Activated CD4-positive, alpha-beta memory T cell treated with anti-CD3 and anti-CD28 coated beads for 36 hours (primary cell): ENCODE measurements at regions of chr6 and their contacts with region 1.

Region 1: DNA sequence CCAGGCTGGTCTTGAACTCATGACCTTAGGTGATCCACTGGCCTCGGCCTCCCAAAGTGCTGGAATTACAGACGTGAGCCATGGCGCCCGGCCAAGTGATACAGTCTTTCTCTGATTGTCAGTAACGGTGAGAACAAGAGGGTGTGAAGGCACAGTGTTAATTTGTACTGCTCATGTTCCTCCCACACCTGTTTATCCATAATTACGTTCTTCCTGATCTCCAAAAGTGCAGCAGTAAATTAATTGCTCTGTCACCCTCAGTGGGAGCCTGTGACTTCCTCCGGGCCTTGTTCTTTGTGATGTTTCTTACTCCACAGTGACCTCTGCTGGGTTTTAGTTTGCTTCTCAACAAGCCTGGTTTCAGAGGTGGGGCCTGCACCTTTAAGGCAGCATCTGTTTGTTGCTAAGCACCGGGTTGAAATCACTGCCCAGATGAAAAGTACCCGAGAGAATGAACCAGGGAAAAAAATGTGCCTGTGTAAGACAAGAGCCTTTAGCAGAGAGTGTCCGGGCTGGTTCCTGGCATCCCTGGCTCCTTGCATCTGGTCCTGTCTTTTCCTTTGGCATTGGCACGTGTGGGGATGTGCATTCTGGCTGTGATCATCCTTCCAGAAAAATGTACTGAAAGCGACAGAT is 89.1 kb upstream of the CLDN20 start:
- DNase-seq: peak; percentile 73
- H3K4me3 Mint-ChIP-seq: no peak overlapping the region
- H3K27ac Mint-ChIP-seq: peak overlapping the region; percentile 7
- H3K4me1 Mint-ChIP-seq: peaks cover 50% of the 10 kb centered on the region
- H3K27me3 Mint-ChIP-seq: no peaks in the 10 kb centered on the region

Region 2: GRCh38 chr6:154410619-154411072 is 764.0 kb before region 1 on chr6:
- CTCF ChIA-PET with region 1: no interaction called
- POLR2A ChIA-PET with region 1: no interaction called
- intact Hi-C with region 1: loop called (anchors 1 kb)
- DNase-seq: peak; percentile 77
- H3K4me3 Mint-ChIP-seq: no peak overlapping the region
- H3K27ac Mint-ChIP-seq: no peak overlapping the region
- H3K4me1 Mint-ChIP-seq: peaks cover 9% of the 10 kb centered on the region
- H3K27me3 Mint-ChIP-seq: peaks cover 20% of the 10 kb centered on the region

Region 3: DNA sequence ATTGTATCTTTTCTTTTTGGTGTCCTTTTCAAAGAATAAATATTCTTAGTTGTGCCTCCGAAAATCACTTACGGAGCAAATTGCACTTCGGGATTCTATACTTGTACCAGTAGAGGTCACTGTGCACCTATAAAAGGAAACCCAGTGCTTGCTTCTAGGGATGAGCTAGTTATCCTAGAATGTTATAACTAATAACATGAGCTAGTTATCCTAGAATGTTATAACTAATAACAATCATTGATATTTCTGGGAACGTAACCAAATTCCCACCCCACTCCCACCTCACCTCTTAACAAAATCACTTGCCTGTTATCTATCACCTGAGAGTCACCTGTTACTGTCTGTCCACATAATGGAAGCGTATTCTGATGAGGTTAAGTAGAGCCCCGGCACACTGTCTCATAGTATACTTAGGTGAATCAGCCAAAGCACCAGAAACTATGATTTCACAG is 306.5 kb before region 1 on chr6:
- CTCF ChIA-PET with region 1: interaction called, 15 read pairs
- POLR2A ChIA-PET with region 1: interaction called, 3 read pairs
- intact Hi-C with region 1: loop called (anchors 1 kb)
- DNase-seq: no peak
- H3K4me3 Mint-ChIP-seq: no peak overlapping the region
- H3K27ac Mint-ChIP-seq: no peak overlapping the region
- H3K4me1 Mint-ChIP-seq: peaks cover 15% of the 10 kb centered on the region
- H3K27me3 Mint-ChIP-seq: no peaks in the 10 kb centered on the region

Region 4: DNA sequence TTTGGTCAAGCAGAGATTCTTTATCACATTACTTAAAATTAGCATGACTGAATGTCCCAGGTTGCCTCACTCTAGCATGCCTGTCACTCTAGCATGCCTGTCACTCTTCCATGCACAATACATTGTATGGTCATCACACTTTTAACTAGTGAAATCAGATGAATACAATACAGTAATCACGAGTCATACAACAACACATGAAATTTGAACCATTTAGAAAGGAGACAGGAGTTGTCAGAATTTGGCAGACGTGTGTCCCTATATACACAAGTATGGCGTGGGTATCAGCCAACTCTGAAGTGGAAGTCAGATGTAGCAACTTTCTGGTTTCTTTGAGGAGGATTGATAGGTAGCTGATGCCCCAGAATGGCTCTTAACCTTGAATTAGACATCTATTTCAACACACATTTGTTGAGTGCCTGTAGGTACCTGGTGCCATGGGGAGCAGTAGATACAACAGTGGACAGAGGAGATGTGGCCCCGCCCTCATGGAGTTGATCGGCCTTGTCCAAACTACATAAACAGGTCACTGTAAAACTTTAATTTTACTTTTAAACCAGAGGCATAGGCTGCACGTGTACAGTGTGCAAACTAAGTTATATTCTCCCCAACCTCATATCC is 295.7 kb before region 1 on chr6:
- CTCF ChIA-PET with region 1: no interaction called
- POLR2A ChIA-PET with region 1: no interaction called
- intact Hi-C with region 1: no loop called
- DNase-seq: no peak
- H3K4me3 Mint-ChIP-seq: no peak overlapping the region
- H3K27ac Mint-ChIP-seq: no peak overlapping the region
- H3K4me1 Mint-ChIP-seq: peaks cover 6% of the 10 kb centered on the region
- H3K27me3 Mint-ChIP-seq: no peaks in the 10 kb centered on the region

Region 5: DNA sequence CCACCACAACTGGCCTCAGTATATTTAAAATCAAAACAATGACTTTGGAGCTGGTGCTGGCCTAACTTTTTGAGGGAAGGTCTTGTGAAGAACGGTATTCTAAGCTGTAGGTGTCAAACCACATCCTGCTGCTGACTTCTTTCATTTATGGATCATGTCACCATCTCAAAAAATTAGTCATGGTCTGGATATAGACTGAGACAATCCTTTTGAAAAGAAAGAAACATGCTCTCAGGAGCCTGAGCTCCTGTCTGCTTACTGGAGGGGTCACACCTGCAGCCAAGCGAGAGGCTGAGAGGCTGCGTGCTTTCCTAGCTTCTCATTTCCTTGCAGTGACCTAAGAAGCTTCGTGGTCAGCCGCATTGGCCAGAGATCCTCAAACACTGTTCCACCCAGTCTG is 124.4 kb before region 1 on chr6:
- CTCF ChIA-PET with region 1: interaction called, 6 read pairs
- POLR2A ChIA-PET with region 1: interaction called, 8 read pairs
- intact Hi-C with region 1: loop called (anchors 1 kb)
- DNase-seq: peak; percentile 62
- H3K4me3 Mint-ChIP-seq: peak overlapping the region; percentile 14
- H3K27ac Mint-ChIP-seq: peak overlapping the region; percentile 85
- H3K4me1 Mint-ChIP-seq: peaks cover 25% of the 10 kb centered on the region
- H3K27me3 Mint-ChIP-seq: no peaks in the 10 kb centered on the region

Region 6: DNA sequence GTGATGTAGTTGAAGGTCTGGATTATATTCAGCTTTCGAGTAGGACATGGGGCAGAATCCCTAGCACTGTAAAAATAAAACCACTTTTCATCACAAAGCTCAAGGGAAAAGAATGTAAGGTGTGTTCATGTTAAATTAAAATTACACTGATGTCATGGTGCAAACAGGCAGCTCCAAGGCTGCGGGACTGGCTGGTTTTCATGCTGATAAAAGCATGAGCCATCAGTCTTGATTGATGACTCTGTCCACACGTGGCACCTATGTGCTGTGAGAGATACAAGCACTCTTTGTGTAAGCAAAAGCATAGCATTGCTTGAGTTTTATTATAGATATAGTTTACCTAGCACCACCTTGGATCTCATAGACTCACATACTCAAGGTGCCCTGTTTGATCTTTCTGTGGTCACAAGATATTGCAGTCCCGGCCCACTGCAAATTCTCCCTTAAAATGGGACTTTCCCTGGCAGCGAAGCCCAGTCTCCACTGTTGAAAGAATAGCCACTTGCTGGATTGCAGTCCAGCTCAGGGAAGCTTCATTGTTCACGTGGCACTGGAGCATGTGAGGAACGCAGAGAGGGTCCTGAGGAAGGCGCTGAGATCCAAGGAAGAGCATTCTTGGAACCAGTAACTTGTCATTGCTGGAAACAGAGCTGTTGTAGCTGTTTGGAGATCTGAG is 89.0 kb before region 1 on chr6:
- CTCF ChIA-PET with region 1: no interaction called
- POLR2A ChIA-PET with region 1: no interaction called
- intact Hi-C with region 1: no loop called
- DNase-seq: no peak
- H3K4me3 Mint-ChIP-seq: no peak overlapping the region
- H3K27ac Mint-ChIP-seq: no peak overlapping the region
- H3K4me1 Mint-ChIP-seq: peaks cover 4% of the 10 kb centered on the region
- H3K27me3 Mint-ChIP-seq: no peaks in the 10 kb centered on the region

Region 7: DNA sequence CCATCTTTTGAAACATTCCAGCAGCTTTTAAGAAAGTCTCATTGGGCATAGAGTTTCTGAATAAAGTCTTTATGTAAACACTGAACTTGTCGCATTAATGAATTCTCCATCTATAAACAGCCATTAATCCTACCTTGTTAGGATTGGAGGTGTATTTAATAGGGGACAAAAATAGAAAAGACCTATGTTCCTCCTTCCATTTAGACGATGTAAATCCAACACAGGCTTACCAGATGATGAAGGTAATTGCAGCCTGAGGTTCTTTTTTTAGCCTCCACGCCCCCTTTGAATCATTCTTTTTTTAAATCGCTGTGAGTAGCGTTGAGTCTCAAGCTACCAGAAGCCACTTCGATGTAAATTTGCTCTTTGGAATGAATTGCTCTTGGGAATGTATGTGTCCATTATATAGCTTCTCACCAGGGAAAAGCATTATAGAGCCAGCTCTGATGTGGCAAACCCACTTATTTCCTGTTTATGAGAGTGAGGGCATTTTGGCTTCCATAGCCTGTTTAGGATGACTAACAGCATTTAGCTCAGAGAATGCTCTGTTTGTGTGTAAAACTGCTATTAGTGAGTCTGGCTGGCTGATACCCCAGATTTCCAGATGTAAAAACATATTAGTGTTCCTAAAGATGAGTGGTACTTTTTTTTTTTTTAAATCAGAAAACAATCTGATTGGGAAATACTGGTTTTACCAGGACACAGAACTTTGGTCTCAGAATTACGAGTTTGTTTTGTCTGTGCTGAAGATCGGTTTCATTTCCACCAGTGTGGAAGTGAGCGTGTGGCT is 14.2 kb after region 1 on chr6:
- CTCF ChIA-PET with region 1: interaction called, 9 read pairs
- POLR2A ChIA-PET with region 1: interaction called, 15 read pairs
- intact Hi-C with region 1: loop called (anchors 1 kb)
- DNase-seq: no peak
- H3K4me3 Mint-ChIP-seq: peak overlapping the region; percentile 37
- H3K27ac Mint-ChIP-seq: peak overlapping the region; percentile 57
- H3K4me1 Mint-ChIP-seq: peaks cover 41% of the 10 kb centered on the region
- H3K27me3 Mint-ChIP-seq: no peaks in the 10 kb centered on the region

Region 8: DNA sequence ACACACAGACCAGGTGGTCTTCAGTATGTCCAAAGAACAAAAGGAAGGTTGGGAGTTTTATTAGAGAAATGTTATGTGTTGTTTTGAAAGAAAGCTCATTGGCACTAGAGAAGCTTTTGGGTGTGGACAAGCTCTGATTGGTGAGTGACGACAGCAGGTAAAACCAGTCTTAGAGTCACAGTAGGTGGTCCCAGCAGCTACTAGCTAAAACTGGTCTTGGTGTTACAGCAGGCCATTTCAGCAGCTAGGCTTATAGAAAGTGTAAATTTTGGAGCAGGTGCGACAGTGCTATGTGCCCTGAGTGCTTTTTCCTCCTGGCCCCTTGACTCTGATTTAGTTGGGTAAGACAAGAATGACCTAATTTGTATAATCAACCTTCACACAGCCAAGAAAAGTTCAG is 92.7 kb after region 1 on chr6:
- CTCF ChIA-PET with region 1: interaction called, 10 read pairs
- POLR2A ChIA-PET with region 1: no interaction called
- intact Hi-C with region 1: loop called (anchors 1 kb)
- DNase-seq: no peak
- H3K4me3 Mint-ChIP-seq: no peak overlapping the region
- H3K27ac Mint-ChIP-seq: no peak overlapping the region
- H3K4me1 Mint-ChIP-seq: peaks cover 6% of the 10 kb centered on the region
- H3K27me3 Mint-ChIP-seq: no peaks in the 10 kb centered on the region